Posterior vena cava (tissue), 2 donors: ENCODE measurements at regions of chr16 and their contacts with region 1.

Region 1: GRCh38 chr16:71894921-71895678 is at the start of gene IST1:
- DNase-seq: peak; percentile 100
- total RNA-seq, gene IST1: 105 to 117 TPM

Region 2: DNA sequence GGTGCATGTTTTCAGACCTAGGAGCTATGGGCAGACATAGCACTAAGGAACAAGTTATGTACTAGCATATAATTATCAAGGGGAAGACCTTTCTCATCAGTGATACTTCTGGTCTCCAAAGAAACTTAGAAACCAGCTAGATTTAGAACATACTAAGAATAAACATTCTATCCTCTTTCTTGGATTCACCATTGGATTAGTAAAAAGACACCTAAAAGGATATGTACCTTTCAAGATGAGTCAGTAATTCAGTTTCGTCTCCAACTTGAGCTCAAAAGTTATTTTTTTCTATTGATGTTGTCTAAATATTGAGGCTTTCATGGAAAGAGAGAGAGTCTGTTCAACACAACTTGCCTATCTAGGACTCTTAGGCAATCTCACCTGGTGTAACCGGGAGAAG is 24.3 kb before region 1 on chr16:
- intact Hi-C with region 1: no loop called
- DNase-seq: no peak

Region 3: DNA sequence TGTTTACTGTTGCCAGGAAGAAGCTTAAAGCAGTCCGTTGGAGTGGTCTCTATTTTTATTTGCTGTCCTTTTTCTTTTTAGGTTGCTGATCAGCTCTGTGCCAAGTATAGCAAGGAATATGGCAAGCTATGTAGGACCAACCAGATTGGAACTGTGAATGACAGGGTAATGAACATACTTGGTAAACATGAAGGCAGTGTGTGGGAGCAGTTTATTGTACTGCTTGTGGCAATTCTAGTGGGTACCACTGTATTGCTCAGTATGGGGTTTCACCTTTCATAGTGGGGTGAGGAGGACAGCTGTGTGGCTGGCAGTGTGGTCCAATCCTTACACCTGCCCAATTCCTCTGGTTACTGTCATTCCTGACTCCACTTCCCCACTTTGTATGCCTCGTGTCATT is 25.6 kb after region 1 on chr16:
- intact Hi-C with region 1: loop called in 1 of 2 experiments (anchors 2 kb)
- DNase-seq: no peak

Region 4: DNA sequence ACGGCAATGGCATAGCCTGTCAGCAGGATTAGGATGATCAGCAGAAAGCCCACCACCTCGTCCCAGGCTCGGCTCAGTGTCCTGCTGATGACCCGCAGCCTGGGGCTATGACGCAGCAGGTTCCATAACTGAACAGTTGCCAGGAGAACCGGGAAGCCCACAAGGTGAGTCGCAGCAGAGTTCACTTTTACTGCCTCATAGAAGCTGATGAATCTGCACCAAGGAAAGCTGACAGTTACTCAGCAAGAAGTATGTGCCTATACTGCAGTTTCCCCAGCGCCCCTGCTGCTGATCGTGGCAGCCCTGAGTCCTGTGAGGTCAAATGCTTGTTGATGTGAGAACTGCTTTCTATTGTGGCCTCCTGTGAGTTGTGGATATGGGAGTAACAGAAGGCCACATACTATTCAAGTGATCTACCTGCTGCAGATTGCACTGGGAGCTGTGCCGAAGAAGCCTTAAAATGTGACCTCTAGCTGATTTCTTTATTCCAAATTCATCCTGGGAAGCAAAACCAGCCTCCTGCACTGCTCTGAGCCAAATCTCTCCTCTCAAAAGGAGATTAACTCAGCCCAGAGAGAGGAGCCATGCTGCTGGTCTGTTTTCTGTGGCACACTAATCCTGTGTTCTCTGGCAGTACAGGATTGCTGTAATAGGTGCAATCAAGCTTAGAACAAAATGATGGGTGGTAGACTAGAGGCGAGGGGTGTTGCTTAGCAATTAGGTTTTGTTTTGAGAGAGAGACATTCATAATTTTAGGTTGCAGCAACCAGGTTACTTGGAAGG is 39.0 kb after region 1 on chr16:
- intact Hi-C with region 1: no loop called
- DNase-seq: no peak